AG04449 (cell line): ENCODE measurements at regions of chr17 and their contacts with region 1.

Region 1: DNA sequence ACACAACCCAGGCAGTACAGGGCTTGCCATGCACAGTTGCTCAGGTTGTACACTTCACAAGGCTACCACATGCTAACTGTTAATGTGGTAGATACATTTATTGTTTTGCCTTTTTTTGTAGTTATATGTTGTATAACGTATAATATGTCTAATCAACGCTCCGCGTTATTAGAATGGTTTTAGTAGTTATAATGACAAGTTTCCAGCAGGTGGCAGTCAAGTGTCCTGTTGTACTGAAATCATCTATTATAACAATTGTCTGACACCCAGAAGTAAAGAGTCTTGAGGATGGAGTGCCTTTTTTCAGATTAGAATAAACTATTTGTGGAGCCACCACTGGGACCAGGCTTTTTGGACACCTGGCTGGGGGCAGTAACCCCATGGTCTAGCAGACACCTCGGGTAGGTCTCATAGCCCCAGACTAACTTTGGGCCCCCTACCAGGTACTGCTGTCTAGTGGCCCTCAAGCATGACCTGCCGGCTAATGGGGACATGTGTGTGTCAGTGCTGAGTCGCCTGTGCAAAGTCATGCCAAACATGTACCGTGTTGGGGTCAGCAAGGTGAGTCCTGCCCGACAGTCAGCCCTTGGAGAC is 32.8 kb downstream of the MYO15A start:
- DNase-seq: no peak
- H3K4me3 ChIP-seq: no peak overlapping the region
- CTCF ChIP-seq: peak; percentile 44

Region 2: GRCh38 chr17:18129041-18129502 is 12.2 kb before region 1 on chr17:
- CTCF ChIA-PET with region 1: interaction called, 19 read pairs
- POLR2A ChIA-PET with region 1: no interaction called
- DNase-seq: peak; percentile 4
- H3K4me3 ChIP-seq: no peak overlapping the region
- CTCF ChIP-seq: no peak

Region 3: DNA sequence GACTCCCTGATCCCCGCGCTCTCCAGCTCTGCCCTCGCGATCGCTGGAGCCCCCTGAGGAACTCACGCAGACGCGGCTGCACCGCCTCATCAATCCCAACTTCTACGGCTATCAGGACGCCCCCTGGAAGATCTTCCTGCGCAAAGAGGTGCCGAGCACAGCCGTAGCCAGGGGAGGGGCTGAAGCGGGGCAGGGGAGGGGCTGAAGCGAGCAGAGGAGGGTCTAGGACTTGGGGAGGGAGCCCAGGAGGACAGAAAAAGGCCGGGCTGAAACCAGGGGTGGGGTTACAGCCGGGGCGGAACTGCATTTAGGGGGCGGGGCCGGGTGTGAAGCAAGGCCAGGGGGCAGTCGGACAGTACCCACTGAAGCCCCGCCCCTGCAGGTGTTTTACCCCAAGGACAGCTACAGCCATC is 12.4 kb after region 1 on chr17:
- CTCF ChIA-PET with region 1: interaction called, 67 read pairs
- POLR2A ChIA-PET with region 1: no interaction called
- DNase-seq: no peak
- H3K4me3 ChIP-seq: peak overlapping the region; percentile 51
- CTCF ChIP-seq: no peak

Region 4: DNA sequence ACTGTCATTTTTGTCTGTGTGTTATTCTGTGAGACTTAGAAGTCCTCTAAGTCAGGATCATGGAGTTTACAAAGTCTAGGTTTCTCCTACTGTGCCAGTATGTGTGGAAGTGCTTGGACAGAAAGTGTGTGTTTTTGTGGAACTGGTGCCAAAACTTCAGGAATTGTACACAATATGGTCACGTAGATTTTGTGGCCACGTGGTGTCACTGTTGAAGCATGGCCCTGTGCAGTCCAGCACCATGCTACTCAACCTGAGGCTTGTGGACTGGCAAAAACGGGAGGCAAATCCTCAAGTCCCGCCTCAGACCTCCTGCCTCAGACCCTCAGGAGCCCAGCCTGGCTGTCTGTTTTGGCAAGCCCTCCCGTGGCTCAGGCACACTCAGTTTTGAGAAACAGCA is 25.6 kb after region 1 on chr17:
- CTCF ChIA-PET with region 1: interaction called, 11 read pairs
- POLR2A ChIA-PET with region 1: no interaction called
- DNase-seq: no peak
- H3K4me3 ChIP-seq: no peak overlapping the region
- CTCF ChIP-seq: no peak

Region 5: DNA sequence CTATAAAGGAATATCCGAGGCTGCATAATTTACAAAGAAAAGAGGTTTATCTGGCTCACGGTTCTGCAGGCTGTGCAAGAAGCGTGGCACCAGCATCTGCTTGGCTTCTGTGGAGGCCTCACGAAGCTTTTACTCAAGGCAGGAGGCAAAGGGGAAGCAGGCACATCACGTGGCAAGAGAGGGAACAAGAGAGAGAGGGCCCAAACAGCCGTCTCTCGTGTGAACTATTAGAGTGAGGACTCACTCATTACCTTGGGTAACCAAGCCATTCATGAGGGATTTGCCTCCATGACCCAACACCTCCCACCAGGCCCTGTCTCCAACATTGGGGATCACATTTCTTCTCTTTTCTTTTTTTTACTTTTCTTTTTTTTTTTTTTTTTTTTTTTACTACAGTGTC is 34.9 kb after region 1 on chr17:
- CTCF ChIA-PET with region 1: interaction called, 12 read pairs
- POLR2A ChIA-PET with region 1: no interaction called
- DNase-seq: no peak
- H3K4me3 ChIP-seq: no peak overlapping the region
- CTCF ChIP-seq: no peak